ENCODE measurements at regions of chr3 and their contacts with region 1.

Region 1: GRCh38 chr3:30606301-30607031 is at the start of gene TGFBR2:
- DNase-seq: peak; percentile 95
- H3K4me3 Mint-ChIP-seq: peak within 1 kb of the TSS; percentile 90
- H3K27ac Mint-ChIP-seq: peak within 1 kb of the TSS; percentile 96
- H3K4me1 Mint-ChIP-seq: peaks cover 57% of the 10 kb centered on the region
- H3K27me3 Mint-ChIP-seq: no peaks in the 10 kb centered on the region
- total RNA-seq, gene TGFBR2: 45.3 and 47.6 TPM in 2 replicates

Region 2: GRCh38 chr3:30475038-30475808 is 131.2 kb before region 1 on chr3:
- intact Hi-C with region 1: loop called (anchors 2 kb)
- DNase-seq: peak; percentile 73
- H3K4me3 Mint-ChIP-seq: peak overlapping the region; percentile 7
- H3K27ac Mint-ChIP-seq: peak overlapping the region; percentile 18
- H3K4me1 Mint-ChIP-seq: peaks cover 33% of the 10 kb centered on the region
- H3K27me3 Mint-ChIP-seq: no peaks in the 10 kb centered on the region

Region 3: GRCh38 chr3:30548600-30548999 is 57.9 kb before region 1 on chr3:
- intact Hi-C with region 1: loop called (anchors 5 kb)
- DNase-seq: peak; percentile 68
- H3K4me3 Mint-ChIP-seq: no peak overlapping the region
- H3K27ac Mint-ChIP-seq: no peak overlapping the region
- H3K4me1 Mint-ChIP-seq: peaks cover 10% of the 10 kb centered on the region
- H3K27me3 Mint-ChIP-seq: no peaks in the 10 kb centered on the region

Region 4: DNA sequence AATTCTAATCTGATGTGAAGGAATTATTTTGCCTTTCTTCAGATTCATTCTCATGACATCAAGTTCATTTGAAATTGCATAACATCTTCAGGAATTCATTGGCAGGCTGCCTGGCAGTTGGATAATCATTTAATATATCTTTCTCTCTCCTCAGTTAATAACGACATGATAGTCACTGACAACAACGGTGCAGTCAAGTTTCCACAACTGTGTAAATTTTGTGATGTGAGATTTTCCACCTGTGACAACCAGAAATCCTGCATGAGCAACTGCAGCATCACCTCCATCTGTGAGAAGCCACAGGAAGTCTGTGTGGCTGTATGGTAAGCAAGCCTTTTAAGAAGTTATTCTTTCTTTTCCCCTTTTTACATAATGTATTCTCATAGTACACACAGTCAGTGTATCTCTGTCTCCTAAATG is 38.1 kb after region 1 on chr3:
- intact Hi-C with region 1: loop called (anchors 1 kb)
- DNase-seq: peak; percentile 89
- H3K4me3 Mint-ChIP-seq: peak overlapping the region; percentile 61
- H3K27ac Mint-ChIP-seq: peak overlapping the region; percentile 93
- H3K4me1 Mint-ChIP-seq: peaks cover 78% of the 10 kb centered on the region
- H3K27me3 Mint-ChIP-seq: no peaks in the 10 kb centered on the region